MCF 10A (cell line): ENCODE measurements at regions of chr2 and their contacts with region 1.

Region 1: GRCh38 chr2:120793677-120794403 is 58.2 kb downstream of the GLI2 start:
- DNase-seq: peak; percentile 51
- H3K4me3 Mint-ChIP-seq: no peak overlapping the region
- H3K27ac Mint-ChIP-seq: no peak overlapping the region
- H3K4me1 Mint-ChIP-seq: peaks cover 31% of the 10 kb centered on the region
- H3K27me3 Mint-ChIP-seq: no peaks in the 10 kb centered on the region
- CTCF ChIP-seq: no peak

Region 2: DNA sequence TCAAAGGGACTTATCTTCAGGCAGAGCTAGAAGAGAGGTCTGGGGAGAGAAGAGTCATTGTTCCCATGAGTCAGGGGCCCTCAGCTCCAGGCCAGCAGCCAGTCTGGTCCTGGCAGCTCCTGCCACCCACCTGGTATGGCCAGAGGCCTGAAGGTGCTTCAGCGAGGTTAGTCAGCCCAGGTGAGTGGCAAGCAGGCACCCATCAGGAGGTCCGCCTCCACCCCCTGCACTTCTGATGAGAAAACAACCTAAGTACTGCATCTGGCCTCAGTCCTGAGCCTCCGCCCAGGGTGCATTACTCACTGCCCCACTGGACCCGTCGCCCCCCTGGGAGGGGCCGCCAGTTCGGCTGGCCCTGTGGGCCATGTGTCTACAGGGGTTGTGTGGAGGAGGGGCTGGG is 317.7 kb before region 1 on chr2:
- CTCF ChIA-PET with region 1: no interaction called
- POLR2A ChIA-PET with region 1: no interaction called
- intact Hi-C with region 1: no loop called
- DNase-seq: peak; percentile 84
- H3K4me3 Mint-ChIP-seq: no peak overlapping the region
- H3K27ac Mint-ChIP-seq: peak overlapping the region; percentile 3
- H3K4me1 Mint-ChIP-seq: peaks cover 32% of the 10 kb centered on the region
- H3K27me3 Mint-ChIP-seq: no peaks in the 10 kb centered on the region
- CTCF ChIP-seq: no peak

Region 3: GRCh38 chr2:120735746-120736170 is 58.1 kb before region 1 on chr2 and contains the start of gene GLI2:
- CTCF ChIA-PET with region 1: no interaction called
- POLR2A ChIA-PET with region 1: no interaction called
- intact Hi-C with region 1: loop called (anchors 10 kb)
- DNase-seq: peak; percentile 70
- H3K4me3 Mint-ChIP-seq: peak within 1 kb of the TSS; percentile 79
- H3K27ac Mint-ChIP-seq: no peak within 1 kb of the TSS
- H3K4me1 Mint-ChIP-seq: no peaks in the 10 kb centered on the region
- H3K27me3 Mint-ChIP-seq: peaks cover 41% of the 10 kb centered on the region
- CTCF ChIP-seq: peak; percentile 79
- total RNA-seq, gene GLI2: 0.61 and 0.74 TPM in 2 replicates

Region 4: DNA sequence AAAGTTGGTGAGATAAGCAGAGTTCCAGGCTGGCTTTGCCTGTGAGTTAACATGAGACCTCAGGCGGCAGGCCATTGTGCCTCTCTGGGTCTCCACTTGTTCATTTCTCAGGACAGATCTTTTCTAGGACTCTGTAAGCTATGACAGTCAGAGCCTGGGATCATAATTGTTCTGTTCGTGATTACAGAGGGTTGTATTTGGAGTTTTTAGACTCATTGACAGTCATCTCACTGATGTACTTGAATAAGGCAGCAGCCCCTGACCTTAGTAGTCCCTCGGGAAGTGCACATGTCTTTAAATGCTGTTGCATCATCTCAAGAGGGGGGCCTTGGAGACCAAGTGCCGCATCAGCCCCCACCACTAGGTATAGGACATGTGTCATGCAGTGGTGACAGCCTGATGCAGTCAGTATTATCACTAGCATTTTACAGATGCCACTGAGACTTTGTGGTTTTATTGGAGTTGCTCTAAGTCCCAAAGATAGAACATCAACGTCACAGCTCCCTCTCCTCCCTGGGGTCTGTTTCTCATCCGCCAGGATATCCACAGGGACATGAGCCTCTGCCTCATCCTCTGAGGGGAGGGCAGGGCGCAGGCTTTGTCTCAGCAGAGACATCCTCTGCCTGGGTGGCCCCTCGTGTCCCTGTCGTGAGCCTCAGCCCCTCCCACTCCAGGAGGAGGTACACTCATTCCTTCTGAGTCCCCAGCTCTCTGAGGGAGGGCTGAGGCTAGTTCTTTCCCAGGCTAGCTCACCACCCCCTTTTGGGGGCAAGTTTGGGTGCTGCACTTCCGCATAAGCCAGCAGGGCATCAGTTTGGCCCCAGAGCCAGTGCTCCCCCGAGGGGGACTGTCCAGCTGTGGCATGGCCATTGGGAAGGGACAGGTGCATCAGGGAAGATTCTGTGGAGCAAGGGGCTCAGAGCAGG is 44.1 kb before region 1 on chr2:
- CTCF ChIA-PET with region 1: no interaction called
- POLR2A ChIA-PET with region 1: no interaction called
- intact Hi-C with region 1: no loop called
- DNase-seq: no peak
- H3K4me3 Mint-ChIP-seq: no peak overlapping the region
- H3K27ac Mint-ChIP-seq: no peak overlapping the region
- H3K4me1 Mint-ChIP-seq: no peaks in the 10 kb centered on the region
- H3K27me3 Mint-ChIP-seq: no peaks in the 10 kb centered on the region
- CTCF ChIP-seq: no peak

Region 5: DNA sequence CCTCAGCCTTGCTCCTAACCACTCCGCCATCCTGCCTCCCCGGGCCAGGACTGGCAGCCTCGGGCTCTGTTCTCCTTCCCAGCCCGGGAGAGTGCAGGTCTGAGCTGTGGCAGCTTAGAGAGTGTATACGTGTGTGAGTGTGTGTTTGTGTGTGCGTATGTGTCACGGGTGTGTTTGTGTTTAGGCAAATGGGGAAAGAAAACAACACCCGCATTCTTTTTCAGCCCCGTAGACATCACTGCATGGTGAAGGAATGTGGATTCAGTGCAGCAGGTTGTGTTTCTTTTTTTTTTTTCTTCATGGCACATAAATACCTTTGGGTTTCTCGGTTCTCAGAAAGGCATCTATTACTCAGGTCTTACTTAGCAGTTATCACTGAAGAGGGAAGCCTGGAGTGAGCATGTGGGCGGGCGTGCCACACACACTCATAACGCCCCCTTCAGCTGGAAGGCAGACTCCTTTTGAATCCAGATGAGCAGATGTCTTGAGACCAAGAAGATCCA is 14.0 kb before region 1 on chr2:
- CTCF ChIA-PET with region 1: no interaction called
- POLR2A ChIA-PET with region 1: no interaction called
- intact Hi-C with region 1: no loop called
- DNase-seq: no peak
- H3K4me3 Mint-ChIP-seq: no peak overlapping the region
- H3K27ac Mint-ChIP-seq: no peak overlapping the region
- H3K4me1 Mint-ChIP-seq: peaks cover 16% of the 10 kb centered on the region
- H3K27me3 Mint-ChIP-seq: no peaks in the 10 kb centered on the region
- CTCF ChIP-seq: no peak

Region 6: GRCh38 chr2:120812866-120813265 is 19.0 kb after region 1 on chr2:
- CTCF ChIA-PET with region 1: interaction called, 3 read pairs
- POLR2A ChIA-PET with region 1: no interaction called
- intact Hi-C with region 1: loop called (anchors 1 kb)
- DNase-seq: no peak
- H3K4me3 Mint-ChIP-seq: no peak overlapping the region
- H3K27ac Mint-ChIP-seq: no peak overlapping the region
- H3K4me1 Mint-ChIP-seq: no peaks in the 10 kb centered on the region
- H3K27me3 Mint-ChIP-seq: peaks cover 33% of the 10 kb centered on the region
- CTCF ChIP-seq: no peak

Region 7: DNA sequence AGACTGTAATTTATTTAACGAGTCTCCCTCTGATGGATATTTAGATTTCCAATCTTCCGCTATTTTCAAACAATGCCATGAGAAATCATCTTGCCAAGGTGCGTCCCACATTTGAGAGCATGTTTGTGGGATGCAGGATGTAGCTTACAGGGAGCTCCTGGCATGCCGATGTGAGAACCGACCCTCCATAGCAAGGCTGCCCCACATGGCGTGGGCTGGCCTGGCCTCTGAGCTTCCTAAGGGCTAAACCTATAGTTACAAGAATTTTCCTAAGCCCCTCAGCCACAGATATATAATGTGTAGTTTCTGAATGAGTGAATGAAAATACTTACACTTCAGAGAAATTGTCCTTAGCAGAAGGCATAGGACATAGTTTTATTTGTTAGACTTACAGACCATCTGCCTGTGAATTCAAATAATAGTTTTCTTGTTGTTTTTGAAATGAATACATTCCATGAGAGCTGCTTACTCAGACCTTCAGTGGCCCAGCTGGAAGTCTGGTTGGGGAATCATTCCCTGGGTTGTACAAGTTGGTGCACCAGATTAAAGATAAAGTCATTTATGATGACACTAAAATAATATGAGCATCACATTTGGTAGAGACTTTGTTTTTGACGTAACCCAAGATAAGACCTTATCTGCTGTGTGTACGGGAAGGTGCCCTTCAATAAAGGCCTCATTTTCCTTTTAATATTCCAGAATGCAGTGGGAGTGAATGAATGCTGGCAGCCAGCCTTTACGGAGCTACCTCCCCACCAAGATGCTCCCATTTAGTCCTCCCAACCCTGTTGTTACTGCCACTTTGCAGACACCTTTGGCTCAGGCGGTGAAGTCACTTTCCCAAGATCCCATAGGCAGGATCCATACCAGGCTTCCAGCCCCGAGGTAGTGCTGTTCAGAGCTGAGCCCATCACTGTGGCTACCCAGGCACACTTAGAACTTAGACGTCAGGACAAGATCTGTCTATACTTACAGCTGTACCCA is 48.9 kb after region 1 on chr2:
- CTCF ChIA-PET with region 1: no interaction called
- POLR2A ChIA-PET with region 1: no interaction called
- intact Hi-C with region 1: no loop called
- DNase-seq: no peak
- H3K4me3 Mint-ChIP-seq: no peak overlapping the region
- H3K27ac Mint-ChIP-seq: no peak overlapping the region
- H3K4me1 Mint-ChIP-seq: no peaks in the 10 kb centered on the region
- H3K27me3 Mint-ChIP-seq: no peaks in the 10 kb centered on the region
- CTCF ChIP-seq: no peak